GM10248 (cell line): ENCODE measurements at regions of chr18 and their contacts with region 1.

Region 1: GRCh38 chr18:55415258-55415871 is 172.6 kb downstream of the TCF4 start:
- DNase-seq: peak; percentile 52
- CTCF ChIP-seq: peak; percentile 87

Region 2: GRCh38 chr18:55300421-55300935 is 114.9 kb before region 1 on chr18:
- CTCF ChIA-PET with region 1: no interaction called
- POLR2A ChIA-PET with region 1: no interaction called
- DNase-seq: no peak
- CTCF ChIP-seq: no peak

Region 3: GRCh38 chr18:55384551-55385275 is 30.7 kb before region 1 on chr18:
- CTCF ChIA-PET with region 1: interaction called, 10 read pairs
- POLR2A ChIA-PET with region 1: no interaction called
- DNase-seq: peak; percentile 32
- CTCF ChIP-seq: peak; percentile 43

Region 4: DNA sequence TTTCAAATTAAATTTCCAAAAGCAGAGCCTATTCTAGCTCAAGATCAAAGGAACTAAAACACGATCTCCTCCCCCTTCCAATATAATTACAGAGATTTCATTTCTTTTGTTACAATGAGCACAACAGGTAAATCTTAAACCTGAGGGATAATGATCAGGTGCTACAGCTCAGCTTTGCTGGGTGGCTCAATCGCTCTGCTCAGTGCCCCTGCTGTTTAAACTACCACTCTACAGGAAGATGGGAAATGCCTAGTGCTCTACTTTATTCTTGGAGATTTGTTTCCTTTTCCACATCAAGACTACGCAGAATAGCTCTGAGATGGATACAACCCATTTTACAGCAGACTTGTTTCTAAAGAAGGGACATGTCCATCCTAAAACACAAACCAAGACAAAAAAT is 10.3 kb after region 1 on chr18:
- CTCF ChIA-PET with region 1: interaction called, 49 read pairs
- POLR2A ChIA-PET with region 1: no interaction called
- DNase-seq: no peak
- CTCF ChIP-seq: no peak

Region 5: GRCh38 chr18:56575819-56576663 is 1160.7 kb after region 1 on chr18:
- CTCF ChIA-PET with region 1: interaction called, 11 read pairs
- POLR2A ChIA-PET with region 1: no interaction called
- DNase-seq: peak; percentile 48
- CTCF ChIP-seq: peak; percentile 32